H1 (cell line): ENCODE measurements at regions of chr16 and their contacts with region 1.

Region 1: GRCh38 chr16:56673921-56674320 is 4.3 kb downstream of the MT1H start:
- DNase-seq: no peak
- H3K4me3 ChIP-seq: no peak overlapping the region
- H3K27ac ChIP-seq: no peak overlapping the region
- H3K4me1 ChIP-seq: peaks cover 3 to 25% (median 15%) of the 10 kb centered on the region in 4 experiments
- H3K27me3 ChIP-seq: peaks cover 30 to 71% (median 52%) of the 10 kb centered on the region in 4 experiments
- CTCF ChIP-seq: peak; percentile 60 to 73 (median 64)
- EP300 ChIP-seq: no peak
- POLR2A ChIP-seq: no peak
- RAD21 ChIP-seq: peak; percentile 68 to 78

Region 2: GRCh38 chr16:56691885-56692284 is 18.0 kb after region 1 on chr16:
- CTCF ChIA-PET with region 1: interaction called, 10 read pairs
- POLR2A ChIA-PET with region 1: interaction called, 205 read pairs
- DNase-seq: no peak
- H3K4me3 ChIP-seq: no peak overlapping the region
- H3K27ac ChIP-seq: no peak overlapping the region
- H3K4me1 ChIP-seq: no peaks in the 10 kb centered on the region
- H3K27me3 ChIP-seq: no peaks in the 10 kb centered on the region
- CTCF ChIP-seq: no peak
- EP300 ChIP-seq: no peak
- POLR2A ChIP-seq: no peak
- RAD21 ChIP-seq: no peak